A673 (cell line): ENCODE measurements at regions of chr5 and their contacts with region 1.

Region 1: GRCh38 chr5:150560401-150561193 is 52.7 kb downstream of the NDST1 start:
- DNase-seq: peak; percentile 90
- H3K4me3 ChIP-seq: no peak overlapping the region
- H3K27ac ChIP-seq: no peak overlapping the region
- H3K4me1 ChIP-seq: no peaks in the 10 kb centered on the region
- H3K27me3 ChIP-seq: no peaks in the 10 kb centered on the region
- CTCF ChIP-seq: peak; percentile 86

Region 2: GRCh38 chr5:150320048-150320555 is 240.5 kb before region 1 on chr5:
- CTCF ChIA-PET with region 1: no interaction called
- POLR2A ChIA-PET with region 1: no interaction called
- intact Hi-C with region 1: no loop called
- DNase-seq: no peak
- H3K4me3 ChIP-seq: no peak overlapping the region
- H3K27ac ChIP-seq: no peak overlapping the region
- H3K4me1 ChIP-seq: no peaks in the 10 kb centered on the region
- H3K27me3 ChIP-seq: no peaks in the 10 kb centered on the region
- CTCF ChIP-seq: no peak

Region 3: DNA sequence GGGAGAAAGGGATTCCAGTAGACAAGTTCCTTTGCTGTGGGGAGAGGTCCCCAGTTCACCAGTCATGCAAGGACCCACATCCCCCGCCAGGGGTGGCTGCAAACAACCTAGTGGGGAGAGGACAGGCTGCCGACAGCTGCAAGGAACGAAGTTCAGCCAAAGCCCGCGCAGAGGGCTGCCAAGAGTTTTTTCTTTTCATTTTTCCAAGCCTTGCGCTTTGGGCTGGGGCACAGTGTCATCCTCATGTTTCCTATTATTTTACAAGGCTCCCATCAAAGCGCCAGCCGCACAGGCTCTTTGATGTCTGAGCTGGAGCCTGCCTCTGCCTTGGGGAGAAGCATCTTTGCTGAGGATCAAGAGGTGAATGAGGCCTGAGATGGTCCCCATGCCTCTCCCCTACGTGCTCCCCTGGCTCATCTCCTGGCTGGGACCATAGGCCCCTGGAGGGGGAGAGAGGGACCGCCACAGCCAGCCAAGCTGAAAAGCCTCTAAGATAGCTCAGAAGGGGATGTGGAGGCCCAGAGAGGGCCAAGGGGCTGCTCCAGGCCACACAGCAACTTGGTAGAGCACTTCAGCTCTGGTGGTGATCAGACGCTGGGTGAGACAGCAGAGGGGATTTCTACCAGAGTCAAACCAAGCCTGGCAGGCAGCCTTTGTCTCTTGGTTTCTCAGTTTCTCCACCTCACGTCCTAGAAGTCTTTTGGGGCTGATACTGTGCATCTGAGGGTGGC is 29.4 kb after region 1 on chr5:
- CTCF ChIA-PET with region 1: no interaction called
- POLR2A ChIA-PET with region 1: no interaction called
- intact Hi-C with region 1: loop called (anchors 1 kb)
- DNase-seq: no peak
- H3K4me3 ChIP-seq: no peak overlapping the region
- H3K27ac ChIP-seq: no peak overlapping the region
- H3K4me1 ChIP-seq: peaks cover under 1% of the 10 kb centered on the region
- H3K27me3 ChIP-seq: no peaks in the 10 kb centered on the region
- CTCF ChIP-seq: no peak

Region 4: GRCh38 chr5:150700594-150701293 is 140.1 kb after region 1 on chr5 and contains the start of gene RBM22:
- CTCF ChIA-PET with region 1: interaction called, 4 read pairs
- POLR2A ChIA-PET with region 1: no interaction called
- intact Hi-C with region 1: loop called (anchors 2 kb)
- DNase-seq: peak; percentile 95
- H3K4me3 ChIP-seq: peak within 1 kb of the TSS; percentile 83
- H3K27ac ChIP-seq: peak within 1 kb of the TSS; percentile 92
- H3K4me1 ChIP-seq: peaks cover 14% of the 10 kb centered on the region
- H3K27me3 ChIP-seq: no peaks in the 10 kb centered on the region
- CTCF ChIP-seq: peak; percentile 74
- total RNA-seq, gene RBM22: 58.7 and 66.8 TPM in 2 replicates

Region 5: GRCh38 chr5:150846654-150847333 is 286.2 kb after region 1 on chr5:
- CTCF ChIA-PET with region 1: interaction called, 4 read pairs
- POLR2A ChIA-PET with region 1: no interaction called
- intact Hi-C with region 1: loop called (anchors 1 kb)
- DNase-seq: peak; percentile 87
- H3K4me3 ChIP-seq: no peak overlapping the region
- H3K27ac ChIP-seq: no peak overlapping the region
- H3K4me1 ChIP-seq: no peaks in the 10 kb centered on the region
- H3K27me3 ChIP-seq: no peaks in the 10 kb centered on the region
- CTCF ChIP-seq: peak; percentile 83

Region 6: DNA sequence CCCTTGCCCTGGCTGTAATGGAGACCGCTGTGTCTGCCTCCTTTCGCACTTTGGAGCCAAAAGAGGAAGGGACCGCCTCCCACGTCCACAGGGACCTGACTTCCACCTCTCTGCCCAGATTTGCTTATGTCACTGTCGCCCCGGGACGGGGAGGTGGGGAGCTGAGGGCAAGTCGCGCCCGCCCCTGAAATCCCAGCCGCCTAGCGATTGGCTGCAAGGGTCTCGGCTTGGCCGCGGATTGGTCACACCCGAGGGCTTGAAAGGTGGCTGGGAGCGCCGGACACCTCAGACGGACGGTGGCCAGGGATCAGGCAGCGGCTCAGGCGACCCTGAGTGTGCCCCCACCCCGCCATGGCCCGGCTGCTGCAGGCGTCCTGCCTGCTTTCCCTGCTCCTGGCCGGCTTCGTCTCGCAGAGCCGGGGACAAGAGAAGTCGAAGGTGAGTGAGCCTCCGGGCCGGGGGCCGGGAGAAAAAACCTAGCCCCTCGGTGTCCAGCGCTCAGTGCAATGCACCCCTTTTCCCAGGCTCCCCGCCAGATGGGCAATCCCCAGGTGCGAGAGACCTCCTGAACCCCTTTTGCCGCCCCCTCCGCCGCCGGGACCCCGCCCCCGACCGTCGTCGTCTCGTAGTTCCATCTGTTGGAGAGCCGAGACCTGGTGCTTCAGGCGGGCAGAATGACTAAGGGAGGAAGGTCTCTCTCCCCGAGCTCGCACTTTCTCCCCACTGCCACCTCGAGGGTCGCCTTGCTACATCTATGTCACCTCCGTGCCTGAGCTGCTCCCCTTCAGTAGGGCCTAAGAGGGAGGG is 459.9 kb after region 1 on chr5 and contains the start of gene GPX3:
- CTCF ChIA-PET with region 1: no interaction called
- POLR2A ChIA-PET with region 1: no interaction called
- intact Hi-C with region 1: no loop called
- DNase-seq: peak; percentile 26
- H3K4me3 ChIP-seq: peak within 1 kb of the TSS; percentile 32
- H3K27ac ChIP-seq: no peak within 1 kb of the TSS
- H3K4me1 ChIP-seq: no peaks in the 10 kb centered on the region
- H3K27me3 ChIP-seq: peaks cover 9% of the 10 kb centered on the region
- CTCF ChIP-seq: no peak
- total RNA-seq, gene GPX3: 0.19 and 0.24 TPM in 2 replicates